SK-N-SH (cell line): ENCODE measurements at regions of chr7 and their contacts with region 1.

Region 1: GRCh38 chr7:26667500-26668133 is 196.8 kb downstream of the SKAP2 start:
- DNase-seq: peak; percentile 71
- H3K4me3 ChIP-seq: peak overlapping the region in 1 of 2 experiments; percentile 21; a peak in 1 of 4 replicates
- H3K27ac ChIP-seq: no peak overlapping the region
- H3K4me1 ChIP-seq: peaks cover 0 to 3% of the 10 kb centered on the region in 2 experiments; a peak in 1 of 4 replicates
- H3K27me3 ChIP-seq: no peaks in the 10 kb centered on the region; the same call in 1 of the 2 replicates
- CTCF ChIP-seq: peak; percentile 98
- EP300 ChIP-seq: peak in 1 of 2 experiments; percentile 53; a peak in 1 of 4 replicates
- RAD21 ChIP-seq: peak; percentile 100

Region 2: DNA sequence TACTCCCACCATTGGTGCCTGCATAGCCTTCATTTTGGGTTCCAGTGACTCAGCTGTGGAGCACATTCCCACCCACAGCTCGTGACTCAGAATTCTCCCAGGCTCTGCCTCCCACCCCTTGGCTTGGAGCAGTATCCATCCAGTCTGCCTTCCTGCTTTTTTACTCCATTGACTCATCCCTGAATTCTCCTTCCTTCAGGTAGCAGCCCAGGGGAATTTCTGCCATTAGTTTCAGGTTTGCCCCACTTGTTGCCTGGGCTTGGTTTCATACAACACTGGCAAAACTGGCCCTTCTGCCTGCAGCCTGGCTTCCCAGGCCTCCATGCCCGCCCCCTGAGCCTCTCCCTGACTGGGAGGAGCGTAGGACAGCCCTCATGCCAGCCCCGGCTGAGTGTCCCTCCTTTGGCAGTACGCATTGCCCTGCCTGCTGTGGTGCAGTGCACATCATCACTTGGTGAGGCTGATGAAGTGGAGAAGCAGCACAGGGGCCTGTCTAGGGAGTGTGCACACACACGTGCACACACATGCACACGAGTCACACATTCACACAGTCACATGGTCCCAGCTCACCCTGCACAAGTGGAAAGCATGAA is 320.9 kb before region 1 on chr7:
- CTCF ChIA-PET with region 1: interaction called, 13 read pairs
- POLR2A ChIA-PET with region 1: no interaction called
- DNase-seq: no peak
- H3K4me3 ChIP-seq: no peak overlapping the region
- H3K27ac ChIP-seq: no peak overlapping the region
- H3K4me1 ChIP-seq: peaks cover 0 to 3% of the 10 kb centered on the region in 2 experiments; a peak in 2 of 4 replicates
- H3K27me3 ChIP-seq: no peaks in the 10 kb centered on the region
- CTCF ChIP-seq: no peak
- EP300 ChIP-seq: no peak
- RAD21 ChIP-seq: no peak

Region 3: GRCh38 chr7:26398756-26399501 is 268.7 kb before region 1 on chr7:
- CTCF ChIA-PET with region 1: interaction called, 43 read pairs
- POLR2A ChIA-PET with region 1: no interaction called
- DNase-seq: peak; percentile 83
- H3K4me3 ChIP-seq: peak overlapping the region; percentile 58 to 63
- H3K27ac ChIP-seq: peak overlapping the region in 1 of 2 experiments; percentile 74; a peak in 2 of 4 replicates
- H3K4me1 ChIP-seq: peaks cover 0 to 21% of the 10 kb centered on the region in 2 experiments; a peak in 1 of 4 replicates
- H3K27me3 ChIP-seq: peaks cover 10% of the 10 kb centered on the region; the same call in 1 of the 2 replicates
- CTCF ChIP-seq: no peak
- EP300 ChIP-seq: no peak
- RAD21 ChIP-seq: peak; percentile 72

Region 4: DNA sequence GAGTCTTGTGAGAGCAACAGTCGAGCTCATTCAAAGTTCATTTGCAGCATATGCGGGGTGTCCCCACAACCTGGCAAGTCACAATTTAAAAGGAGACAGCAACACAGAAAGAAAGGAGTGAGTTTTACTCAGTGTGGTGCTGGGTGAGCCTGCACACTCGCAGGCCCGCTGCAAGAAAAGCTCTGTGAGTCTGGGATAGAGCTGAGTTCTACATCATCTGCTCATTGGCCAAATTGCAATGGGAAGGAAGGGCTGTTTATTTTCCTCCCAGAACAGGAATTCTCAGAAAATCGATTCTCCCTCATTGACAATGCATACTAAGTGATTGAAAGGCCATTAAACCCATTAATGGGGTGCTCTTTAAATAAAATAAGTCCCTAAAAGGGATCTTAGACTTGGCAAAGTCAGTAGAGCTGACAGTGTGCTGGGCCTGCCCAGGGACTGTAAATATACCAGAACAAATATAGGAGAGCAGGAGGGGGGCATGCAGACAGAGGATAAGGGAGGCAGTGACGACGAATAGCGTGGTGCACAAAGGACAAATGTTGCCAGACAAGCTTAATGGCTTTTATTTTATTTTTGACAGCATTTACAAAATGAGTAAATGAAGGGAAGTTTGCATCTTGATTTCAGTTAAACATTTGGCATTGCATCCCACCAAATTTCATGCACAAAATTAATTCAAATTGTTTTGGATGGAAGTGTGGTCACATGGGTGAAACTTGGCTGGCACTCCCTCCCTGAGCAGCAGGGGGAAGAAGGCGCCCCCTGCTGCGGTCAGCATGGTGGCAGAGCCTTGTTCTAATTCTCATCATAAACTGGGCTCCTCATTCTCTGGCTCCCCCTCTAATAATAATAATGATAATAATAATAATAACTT is 160.3 kb before region 1 on chr7:
- CTCF ChIA-PET with region 1: interaction called, 24 read pairs
- POLR2A ChIA-PET with region 1: no interaction called
- DNase-seq: peak; percentile 45
- H3K4me3 ChIP-seq: no peak overlapping the region
- H3K27ac ChIP-seq: no peak overlapping the region
- H3K4me1 ChIP-seq: no peaks in the 10 kb centered on the region; a peak in 1 of 4 replicates
- H3K27me3 ChIP-seq: 0 out of 2 replicates have a peak, but pooled peaks cover 4% of the 10 kb centered on the region
- CTCF ChIP-seq: no peak
- EP300 ChIP-seq: no peak
- RAD21 ChIP-seq: peak; percentile 37

Region 5: DNA sequence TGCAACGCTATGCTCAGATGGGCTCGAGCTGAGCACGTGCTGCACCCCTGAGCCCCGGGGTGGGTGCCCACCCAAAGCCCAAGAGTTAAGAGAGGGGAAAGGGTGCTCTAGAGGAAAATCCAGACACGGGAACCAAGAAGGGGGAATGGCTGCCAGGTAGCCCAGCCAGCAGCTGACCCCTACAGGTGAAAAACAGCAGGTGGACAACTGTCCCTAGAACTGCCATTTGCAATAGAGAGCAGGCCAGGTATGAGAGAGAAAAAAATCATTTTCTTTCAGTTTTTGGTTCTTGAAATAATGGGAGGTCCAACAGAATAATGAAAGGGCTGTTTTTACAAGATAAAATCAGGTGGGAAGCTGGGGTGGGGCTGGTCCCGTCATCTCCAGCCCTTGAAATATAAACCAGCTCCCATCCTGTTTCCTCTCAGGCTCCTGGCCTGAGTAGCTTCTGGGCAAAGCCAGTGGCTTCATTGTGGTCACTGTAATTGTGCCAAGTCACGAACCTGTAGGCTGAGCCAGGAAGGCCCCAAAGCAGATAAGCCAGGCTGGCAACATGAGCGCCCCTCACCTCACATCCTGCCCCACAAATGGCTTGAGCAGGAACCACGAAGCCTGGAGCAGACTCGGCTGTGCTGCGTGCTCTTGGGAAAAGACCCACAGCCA is 118.2 kb before region 1 on chr7:
- CTCF ChIA-PET with region 1: interaction called, 34 read pairs
- POLR2A ChIA-PET with region 1: no interaction called
- DNase-seq: no peak
- H3K4me3 ChIP-seq: no peak overlapping the region
- H3K27ac ChIP-seq: no peak overlapping the region
- H3K4me1 ChIP-seq: peaks cover 0 to 11% of the 10 kb centered on the region in 2 experiments; a peak in 1 of 4 replicates
- H3K27me3 ChIP-seq: no peaks in the 10 kb centered on the region
- CTCF ChIP-seq: no peak
- EP300 ChIP-seq: no peak
- RAD21 ChIP-seq: no peak

Region 6: DNA sequence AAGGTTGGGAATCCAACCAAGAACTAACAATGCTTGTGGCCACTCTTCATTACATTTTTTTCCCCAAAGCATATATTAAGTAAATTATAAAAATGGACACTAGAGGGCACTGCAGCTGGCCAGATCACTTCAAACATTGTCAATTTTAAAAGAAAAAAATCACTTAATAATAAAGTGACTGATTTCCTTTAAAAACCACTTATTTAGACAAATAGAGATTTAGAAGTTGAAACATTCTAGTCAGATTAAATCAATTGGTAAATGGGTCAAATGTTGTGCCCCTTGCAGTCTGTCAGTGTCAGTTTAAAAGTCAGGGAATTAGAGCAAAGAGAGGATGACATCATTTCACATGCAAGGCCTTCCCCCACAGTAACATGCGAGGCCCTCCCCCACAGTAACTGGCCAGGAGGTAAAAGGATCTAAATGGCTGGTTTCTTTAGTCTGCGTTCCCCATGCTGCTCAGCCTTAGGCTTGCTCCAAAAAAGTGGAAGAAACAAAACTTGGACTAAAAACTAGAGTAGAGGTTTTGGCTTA is 18.9 kb after region 1 on chr7:
- CTCF ChIA-PET with region 1: interaction called, 70 read pairs
- POLR2A ChIA-PET with region 1: no interaction called
- DNase-seq: peak; percentile 17
- H3K4me3 ChIP-seq: no peak overlapping the region; a peak in 1 of 4 replicates
- H3K27ac ChIP-seq: no peak overlapping the region
- H3K4me1 ChIP-seq: peaks cover 0 to 5% of the 10 kb centered on the region in 2 experiments; a peak in 2 of 4 replicates
- H3K27me3 ChIP-seq: peaks cover 9% of the 10 kb centered on the region
- CTCF ChIP-seq: peak; percentile 98
- EP300 ChIP-seq: no peak
- RAD21 ChIP-seq: peak; percentile 83

Region 7: DNA sequence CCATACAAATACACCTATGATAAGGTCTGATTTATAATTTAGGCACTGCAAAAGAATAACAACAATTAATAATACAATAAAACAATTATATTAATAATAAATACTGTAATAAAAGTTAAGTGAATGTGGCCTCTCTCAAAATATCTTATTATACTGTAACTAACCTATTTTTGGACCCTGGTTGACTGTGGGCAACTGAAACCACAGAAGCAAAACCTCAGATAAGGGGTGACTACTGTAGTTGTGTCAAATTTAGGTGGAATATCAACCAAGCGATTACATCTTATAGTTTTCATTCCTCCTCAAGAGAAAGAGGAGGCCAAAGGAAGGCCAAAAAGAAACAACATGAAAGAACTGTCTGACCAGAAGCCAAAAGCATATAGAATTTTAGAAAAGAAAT is 92.9 kb after region 1 on chr7:
- CTCF ChIA-PET with region 1: no interaction called
- POLR2A ChIA-PET with region 1: no interaction called
- DNase-seq: no peak
- H3K4me3 ChIP-seq: no peak overlapping the region
- H3K27ac ChIP-seq: no peak overlapping the region
- H3K4me1 ChIP-seq: no peaks in the 10 kb centered on the region
- H3K27me3 ChIP-seq: no peaks in the 10 kb centered on the region
- CTCF ChIP-seq: no peak
- EP300 ChIP-seq: no peak
- RAD21 ChIP-seq: no peak

Region 8: GRCh38 chr7:26861050-26861449 is 193.4 kb after region 1 on chr7:
- CTCF ChIA-PET with region 1: no interaction called
- POLR2A ChIA-PET with region 1: no interaction called
- DNase-seq: no peak
- H3K4me3 ChIP-seq: no peak overlapping the region
- H3K27ac ChIP-seq: no peak overlapping the region
- H3K4me1 ChIP-seq: peaks cover 0 to 14% of the 10 kb centered on the region in 2 experiments; a peak in 2 of 4 replicates
- H3K27me3 ChIP-seq: peaks cover 40% of the 10 kb centered on the region; the same call in 1 of the 2 replicates
- CTCF ChIP-seq: no peak
- EP300 ChIP-seq: no peak
- RAD21 ChIP-seq: no peak

Region 9: DNA sequence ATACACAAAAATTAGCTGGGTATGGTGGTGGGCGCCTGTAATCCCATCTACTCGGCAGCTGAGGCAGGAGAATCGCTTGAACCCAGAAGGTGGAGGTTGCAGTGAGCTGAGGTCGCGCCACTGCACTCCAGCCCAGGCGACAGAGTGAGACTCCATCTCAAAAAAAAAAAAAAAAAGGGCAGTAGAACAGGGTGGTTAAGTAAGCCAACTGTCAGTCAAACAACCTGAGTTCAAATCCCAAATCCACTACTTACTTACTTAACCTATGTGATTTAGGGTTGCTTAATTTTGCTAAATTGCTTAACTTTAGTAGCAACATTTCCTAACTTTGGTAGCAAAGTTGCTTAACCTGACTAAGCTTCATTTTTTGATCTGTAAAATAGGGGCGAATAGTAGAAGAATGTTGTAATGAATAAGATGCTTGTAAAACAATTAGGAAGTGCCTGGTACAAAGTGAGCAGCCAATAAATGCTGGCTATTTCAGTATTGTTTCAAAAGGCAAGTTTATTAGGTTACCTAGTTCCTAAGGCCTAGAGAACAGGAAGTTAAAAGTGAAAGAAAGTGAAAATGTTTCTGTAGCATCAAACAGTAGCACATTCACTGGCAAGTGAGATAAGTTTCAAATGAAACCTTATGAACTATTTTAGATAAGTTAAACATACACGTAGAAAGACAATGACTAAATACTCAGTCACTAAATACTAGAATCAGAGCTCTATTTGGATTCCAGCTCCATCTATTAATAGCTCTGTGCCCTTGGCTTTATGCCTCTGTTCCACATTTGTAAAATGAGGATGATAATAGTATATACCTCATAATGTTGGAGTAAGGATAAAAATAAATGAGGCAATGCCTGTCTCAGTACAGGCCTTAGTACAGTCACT is 363.9 kb after region 1 on chr7:
- CTCF ChIA-PET with region 1: no interaction called
- POLR2A ChIA-PET with region 1: no interaction called
- DNase-seq: no peak
- H3K4me3 ChIP-seq: no peak overlapping the region
- H3K27ac ChIP-seq: no peak overlapping the region
- H3K4me1 ChIP-seq: no peaks in the 10 kb centered on the region
- H3K27me3 ChIP-seq: peaks cover 26% of the 10 kb centered on the region; the same call in 1 of the 2 replicates
- CTCF ChIP-seq: no peak
- EP300 ChIP-seq: no peak
- RAD21 ChIP-seq: no peak